Kidney (tissue), 22 donors: ENCODE measurements at regions of chr3 and their contacts with region 1.

Region 1: GRCh38 chr3:28328188-28329151 is 20.1 kb upstream of the ZCWPW2 start:
- DNase-seq: peak in 2 of 5 donors; percentile 37 to 43
- H3K4me3 ChIP-seq: no peak overlapping the region
- H3K27ac ChIP-seq: no peak overlapping the region
- H3K4me1 ChIP-seq: no peaks in the 10 kb centered on the region
- H3K27me3 ChIP-seq: no peaks in the 10 kb centered on the region
- CTCF ChIP-seq: peak; percentile 44

Region 2: DNA sequence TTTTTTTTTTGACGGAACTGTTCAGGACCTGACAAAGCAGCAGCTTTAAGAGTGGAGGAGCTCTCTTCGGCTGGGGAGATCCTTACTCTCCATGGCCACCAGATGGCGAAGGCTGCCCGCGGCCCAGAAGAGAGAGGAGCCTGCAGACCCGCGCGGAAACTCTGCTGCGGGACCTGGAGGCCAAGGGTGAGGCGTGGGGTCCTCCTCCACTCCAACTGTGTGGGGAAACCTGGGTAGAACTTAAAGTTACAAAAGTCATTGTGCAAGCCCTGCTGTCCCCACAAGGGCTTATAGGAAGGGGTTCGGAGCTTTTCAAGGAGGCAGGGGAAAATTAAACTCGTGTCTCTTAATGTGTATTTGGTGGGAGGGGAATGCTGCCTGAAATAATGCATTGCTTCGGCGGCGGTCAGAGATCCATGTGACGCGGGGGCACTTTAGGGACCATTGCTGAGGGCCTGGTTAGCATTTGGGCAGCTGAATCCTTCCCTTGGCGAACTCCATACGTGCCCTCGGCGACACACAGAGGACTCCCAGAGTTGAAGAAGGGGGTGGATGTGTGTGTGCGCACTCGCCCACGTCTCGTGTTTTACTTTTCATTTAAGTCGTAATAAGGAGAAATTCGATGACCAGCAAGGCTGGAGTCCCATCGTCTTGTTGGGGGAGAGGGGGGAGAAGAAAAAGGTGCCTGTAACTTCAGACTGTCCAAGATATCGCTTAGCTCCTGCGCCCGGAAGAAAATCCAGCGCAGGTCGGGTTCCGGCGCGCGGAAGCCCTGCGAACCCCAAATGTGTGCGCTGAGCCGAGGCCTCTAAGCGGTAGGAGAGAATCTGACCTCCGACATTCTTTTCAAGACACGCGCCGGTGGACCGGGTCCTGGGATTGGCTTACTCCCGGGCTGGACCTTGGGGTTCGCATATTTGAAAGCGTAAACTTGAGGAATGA is 616.1 kb before region 1 on chr3:
- intact Hi-C with region 1: loop called (anchors 10 kb)
- DNase-seq: peak; percentile 79 to 92 (median 88)
- H3K4me3 ChIP-seq: peak overlapping the region; percentile 53 to 88 (median 83)
- H3K27ac ChIP-seq: peak overlapping the region in 1 of 2 donors; percentile 32
- H3K4me1 ChIP-seq: peaks cover 0 to 16% (median 6%) of the 10 kb centered on the region in 3 donors
- H3K27me3 ChIP-seq: peaks cover 40% of the 10 kb centered on the region
- CTCF ChIP-seq: peak; percentile 81